ENCODE measurements at regions of chr3 and their contacts with region 1.

Region 1: DNA sequence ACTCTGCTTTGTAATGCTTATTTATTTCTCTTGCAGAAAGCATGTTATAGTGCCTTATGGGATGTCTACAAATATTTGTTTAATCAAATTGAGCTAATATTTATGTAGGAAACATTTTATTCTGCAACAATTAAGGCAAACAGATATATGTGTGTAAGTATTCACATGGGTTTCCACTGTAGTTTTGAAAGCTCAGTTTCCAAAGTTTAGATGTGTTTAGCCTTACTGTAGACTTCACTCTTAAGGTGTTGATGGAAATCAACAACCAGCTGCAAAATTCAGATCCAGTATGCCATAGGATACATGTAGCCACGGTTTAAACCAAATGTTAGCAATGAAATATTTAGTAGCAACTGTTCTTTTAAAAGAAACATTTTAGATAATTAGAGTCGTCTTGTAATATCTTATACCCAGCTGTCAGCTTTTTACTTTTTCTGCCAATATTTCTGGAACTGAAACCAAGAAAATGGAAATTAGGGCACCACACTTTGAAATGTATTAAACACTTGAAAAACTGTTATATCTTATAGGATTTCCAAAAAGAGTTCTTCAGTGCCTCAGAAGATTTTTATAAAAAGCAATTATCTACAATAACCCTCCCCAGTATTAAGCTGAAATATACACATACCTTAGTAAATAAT is 18.5 kb downstream of the PIK3CA start:
- DNase-seq: no peak
- ATAC-seq: no peak
- H3K4me3 ChIP-seq: no peak overlapping the region
- H3K27ac ChIP-seq: no peak overlapping the region
- H3K4me1 ChIP-seq: peaks cover 0 to 14% (median 5%) of the 10 kb centered on the region in 12 donors
- H3K27me3 ChIP-seq: no peaks in the 10 kb centered on the region
- CTCF ChIP-seq: no peak
- POLR2A ChIP-seq: no peak

Region 2: DNA sequence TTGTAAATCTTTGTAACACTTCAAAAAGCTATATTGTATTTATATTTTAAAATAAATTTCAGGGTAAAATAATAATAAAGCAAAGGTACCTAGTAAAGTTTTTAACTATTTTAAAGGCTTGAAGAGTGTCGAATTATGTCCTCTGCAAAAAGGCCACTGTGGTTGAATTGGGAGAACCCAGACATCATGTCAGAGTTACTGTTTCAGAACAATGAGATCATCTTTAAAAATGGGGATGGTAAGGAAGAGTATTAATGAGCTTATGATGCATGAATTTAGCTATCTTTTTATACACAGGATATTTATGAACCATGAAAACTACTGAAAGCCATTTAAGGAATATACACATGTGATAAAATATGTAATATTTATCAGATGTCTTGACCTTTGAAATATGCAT is 57.9 kb after region 1 on chr3:
- intact Hi-C with region 1: loop called in 1 of 10 experiments (anchors 10 kb)
- DNase-seq: no peak
- ATAC-seq: peak in 3 of 4 donors; percentile 59 to 73 (median 67)
- H3K4me3 ChIP-seq: no peak overlapping the region
- H3K27ac ChIP-seq: no peak overlapping the region
- H3K4me1 ChIP-seq: peaks cover 0 to 7% (median 0%) of the 10 kb centered on the region in 12 donors
- H3K27me3 ChIP-seq: no peaks in the 10 kb centered on the region
- CTCF ChIP-seq: no peak
- POLR2A ChIP-seq: no peak

Measured in heart left ventricle (tissue), 16 donors.